Activated CD4-positive, alpha-beta memory T cell treated with anti-CD3 and anti-CD28 coated beads, Interleukin-2, amount 10 ng/mL, durations not matched to agents 7 days and 5 days (primary cell): ENCODE measurements at regions of chr11 and their contacts with region 1.

Region 1: DNA sequence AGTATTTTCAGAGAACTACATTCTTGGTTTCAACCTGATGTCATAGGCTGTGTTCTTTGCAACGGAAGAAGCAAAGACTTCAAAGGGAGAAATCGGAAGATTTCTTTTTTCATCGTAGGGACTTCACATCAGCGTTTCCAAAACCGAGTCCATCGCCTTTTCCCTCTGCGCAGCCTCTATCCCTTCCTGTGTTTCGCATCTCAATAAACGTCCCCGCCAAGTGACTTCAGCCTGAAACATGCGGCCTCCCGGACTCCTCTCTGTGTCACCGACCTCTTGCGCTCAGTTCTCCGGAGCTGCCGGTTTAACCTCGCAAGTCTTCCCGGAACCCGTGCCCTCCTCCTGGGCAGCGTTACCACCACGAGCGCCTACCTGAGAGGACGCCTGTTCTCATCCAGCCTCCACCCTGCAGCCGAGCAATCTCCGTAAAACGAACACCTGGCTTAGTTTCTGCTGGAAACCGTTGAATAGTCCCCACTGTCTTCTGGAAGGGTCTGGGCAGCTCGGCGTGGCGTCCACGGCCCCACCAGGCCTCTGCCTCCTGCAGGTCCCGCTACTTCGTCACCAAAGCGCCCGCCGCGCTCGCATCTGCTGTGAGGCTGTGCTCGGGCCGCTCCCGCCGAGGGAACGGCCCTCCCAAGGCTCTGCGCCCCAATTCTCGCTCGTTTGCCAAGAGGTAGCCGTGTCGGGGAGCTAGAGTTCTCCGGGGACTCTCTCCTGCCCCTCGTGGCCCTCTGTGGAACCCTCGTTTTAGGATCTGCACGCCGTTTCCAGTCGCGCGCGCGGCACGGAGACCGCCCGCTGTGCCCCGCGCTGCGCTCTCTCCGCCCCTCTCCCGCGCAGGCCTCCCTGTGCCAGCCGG is at the start of gene GLB1L3:
- DNase-seq: peak; percentile 88
- H3K4me3 Mint-ChIP-seq: peak within 1 kb of the TSS; percentile 92
- H3K27ac Mint-ChIP-seq: peak within 1 kb of the TSS; percentile 91
- H3K4me1 Mint-ChIP-seq: peaks cover 59% of the 10 kb centered on the region
- H3K27me3 Mint-ChIP-seq: peaks cover 4% of the 10 kb centered on the region
- total RNA-seq, gene GLB1L3: 6.9 TPM

Region 2: DNA sequence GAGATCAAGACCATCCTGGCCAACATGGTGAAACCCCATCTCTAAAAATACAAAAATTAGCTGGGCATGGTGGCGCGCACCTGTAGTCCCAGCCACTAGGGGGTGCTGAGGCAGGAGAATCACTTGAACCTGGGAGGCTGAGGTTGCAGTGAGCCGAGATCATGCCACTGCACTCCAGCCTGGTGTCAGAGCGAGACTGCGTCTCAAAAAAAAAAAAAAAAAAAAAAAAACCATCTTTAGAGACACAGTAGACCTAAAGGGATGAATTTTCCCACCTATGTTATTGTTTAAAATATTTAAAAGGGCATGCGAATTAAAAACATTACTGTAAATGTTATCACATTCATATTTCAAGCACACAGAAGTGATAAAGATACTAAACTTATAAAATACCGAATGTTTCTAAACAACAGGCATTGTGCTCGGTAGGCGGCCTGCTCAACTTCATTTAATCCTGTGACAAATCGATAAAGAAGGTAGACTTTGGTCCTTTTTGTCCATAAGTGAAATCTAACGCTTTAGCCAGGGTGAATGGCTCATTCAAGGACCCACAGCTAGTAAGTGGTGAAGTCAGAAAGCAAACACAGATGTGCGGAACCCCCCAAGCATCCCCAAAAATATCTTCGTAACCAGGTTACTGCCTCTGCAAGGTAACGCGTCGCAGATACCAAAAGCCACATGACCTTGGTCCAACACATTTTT is 68.1 kb before region 1 on chr11:
- CTCF ChIA-PET with region 1: interaction called, 11 read pairs
- POLR2A ChIA-PET with region 1: interaction called, 5 read pairs
- DNase-seq: peak; percentile 74
- H3K4me3 Mint-ChIP-seq: no peak overlapping the region
- H3K27ac Mint-ChIP-seq: no peak overlapping the region
- H3K4me1 Mint-ChIP-seq: peaks cover 6% of the 10 kb centered on the region
- H3K27me3 Mint-ChIP-seq: no peaks in the 10 kb centered on the region

Region 3: GRCh38 chr11:134253188-134253993 is 22.4 kb before region 1 on chr11 and contains the starts of genes ACAD8 and THYN1:
- CTCF ChIA-PET with region 1: interaction called, 16 read pairs
- POLR2A ChIA-PET with region 1: interaction called, 18 read pairs
- DNase-seq: peak; percentile 97
- H3K4me3 Mint-ChIP-seq: peak within 1 kb of the TSS; percentile 88
- H3K27ac Mint-ChIP-seq: peak within 1 kb of the TSS; percentile 64
- H3K4me1 Mint-ChIP-seq: peaks cover 44% of the 10 kb centered on the region
- H3K27me3 Mint-ChIP-seq: no peaks in the 10 kb centered on the region
- total RNA-seq, gene ACAD8: 21.8 to 23.3 TPM
- total RNA-seq, gene THYN1: 61.5 to 67.0 TPM

Region 4: DNA sequence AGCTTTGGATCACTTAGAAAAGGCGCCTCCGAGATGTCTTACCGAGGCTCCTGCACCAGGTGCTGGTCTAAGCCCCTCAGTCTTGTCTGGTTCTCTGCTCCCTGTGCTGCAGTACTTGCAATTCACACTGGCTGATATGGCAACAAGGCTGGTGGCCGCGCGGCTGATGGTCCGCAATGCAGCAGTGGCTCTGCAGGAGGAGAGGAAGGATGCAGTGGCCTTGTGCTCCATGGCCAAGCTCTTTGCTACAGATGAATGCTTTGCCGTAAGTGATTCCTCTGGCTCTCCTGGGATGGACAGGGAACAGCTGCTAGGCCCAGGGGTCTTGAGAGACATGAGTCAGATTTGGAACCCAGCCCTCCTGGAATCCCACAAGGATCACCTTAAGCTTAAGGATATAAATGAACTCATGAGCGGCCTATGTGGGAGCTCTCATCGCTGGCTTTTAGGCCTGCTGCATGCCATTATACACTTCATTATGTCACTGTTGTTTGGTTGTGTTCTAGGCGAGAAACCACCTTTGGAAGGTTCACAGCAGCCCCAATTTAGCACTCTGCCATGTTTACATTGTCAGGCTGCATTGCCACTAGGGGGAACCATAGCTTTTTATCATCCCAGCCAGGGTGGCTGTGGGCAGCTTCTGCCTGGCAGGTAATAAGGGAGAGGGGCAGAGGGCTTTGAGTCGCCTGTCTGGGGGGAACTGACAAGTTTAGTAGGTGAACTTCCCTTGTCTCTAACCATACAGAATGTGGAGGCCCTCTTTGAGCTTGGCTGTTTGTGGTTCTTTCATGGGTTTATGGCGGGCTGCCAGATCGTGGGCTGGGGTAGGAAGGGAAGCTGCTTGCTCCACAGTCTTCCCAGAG is 13.9 kb before region 1 on chr11:
- CTCF ChIA-PET with region 1: interaction called, 39 read pairs
- POLR2A ChIA-PET with region 1: interaction called, 37 read pairs
- DNase-seq: peak; percentile 46
- H3K4me3 Mint-ChIP-seq: no peak overlapping the region
- H3K27ac Mint-ChIP-seq: no peak overlapping the region
- H3K4me1 Mint-ChIP-seq: peaks cover 17% of the 10 kb centered on the region
- H3K27me3 Mint-ChIP-seq: no peaks in the 10 kb centered on the region

Region 5: GRCh38 chr11:134331354-134332188 is 55.8 kb after region 1 on chr11 and contains the start of gene GLB1L2:
- CTCF ChIA-PET with region 1: interaction called, 5 read pairs
- POLR2A ChIA-PET with region 1: interaction called, 11 read pairs
- DNase-seq: peak; percentile 82
- H3K4me3 Mint-ChIP-seq: peak within 1 kb of the TSS; percentile 77
- H3K27ac Mint-ChIP-seq: no peak within 1 kb of the TSS
- H3K4me1 Mint-ChIP-seq: peaks cover 16% of the 10 kb centered on the region
- H3K27me3 Mint-ChIP-seq: peaks cover 49% of the 10 kb centered on the region
- total RNA-seq, gene GLB1L2: 2.1 to 2.5 TPM